Activated CD8-positive, alpha-beta T cell treated with anti-CD3 and anti-CD28 coated beads, Interleukin-2, amount 10 ng/mL, durations not matched to agents 7 days and 5 days (primary cell): ENCODE measurements at regions of chr12 and their contacts with region 1.

Region 1: DNA sequence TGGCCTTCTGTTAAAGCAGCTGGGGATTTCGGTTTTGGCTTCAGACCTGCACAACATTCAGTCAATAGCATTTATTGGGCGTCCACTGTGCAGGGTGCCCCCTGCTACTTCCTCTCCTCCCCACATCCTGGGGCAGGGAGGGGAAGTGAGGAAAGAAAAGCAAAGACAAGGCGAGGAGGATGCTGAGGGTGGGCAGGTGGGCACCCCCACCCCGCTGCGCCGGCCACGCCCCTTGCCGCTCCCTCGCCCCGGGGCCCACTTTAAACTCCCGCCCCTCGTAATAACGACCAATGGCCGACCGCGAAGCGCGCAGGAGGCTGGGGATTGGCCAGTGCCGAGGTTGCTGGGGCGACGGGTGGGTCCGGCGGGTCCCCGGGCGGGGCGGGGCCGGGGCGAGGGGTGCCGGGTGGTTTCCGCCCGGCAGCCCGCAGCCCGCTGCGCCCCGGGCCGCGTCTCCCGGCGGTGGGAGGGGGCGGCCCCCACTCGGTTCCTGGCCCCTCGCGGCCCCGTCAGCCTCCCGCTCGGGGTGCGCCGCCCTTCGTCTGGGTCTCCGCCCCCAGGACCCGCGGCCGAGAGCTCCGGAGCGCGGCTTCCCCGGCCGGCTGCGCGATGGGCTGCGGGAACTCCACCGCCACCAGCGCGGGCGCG is at the start of gene C12orf75:
- DNase-seq: peak; percentile 96
- ATAC-seq: peak; percentile 87
- H3K4me3 Mint-ChIP-seq: peak within 1 kb of the TSS; percentile 91
- H3K27ac Mint-ChIP-seq: peak within 1 kb of the TSS; percentile 91
- H3K4me1 Mint-ChIP-seq: peaks cover 76% of the 10 kb centered on the region
- H3K27me3 Mint-ChIP-seq: no peaks in the 10 kb centered on the region
- total RNA-seq, gene C12orf75: 301 to 311 TPM

Region 2: GRCh38 chr12:105235732-105236476 is 94.5 kb before region 1 on chr12 and contains the start of gene APPL2:
- CTCF ChIA-PET with region 1: interaction called, 10 read pairs
- POLR2A ChIA-PET with region 1: interaction called, 6 read pairs
- DNase-seq: peak; percentile 84
- ATAC-seq: peak; percentile 85
- H3K4me3 Mint-ChIP-seq: peak within 1 kb of the TSS; percentile 87
- H3K27ac Mint-ChIP-seq: peak within 1 kb of the TSS; percentile 86
- H3K4me1 Mint-ChIP-seq: peaks cover 26% of the 10 kb centered on the region
- H3K27me3 Mint-ChIP-seq: no peaks in the 10 kb centered on the region
- total RNA-seq, gene APPL2: 19.0 to 20.4 TPM

Region 3: DNA sequence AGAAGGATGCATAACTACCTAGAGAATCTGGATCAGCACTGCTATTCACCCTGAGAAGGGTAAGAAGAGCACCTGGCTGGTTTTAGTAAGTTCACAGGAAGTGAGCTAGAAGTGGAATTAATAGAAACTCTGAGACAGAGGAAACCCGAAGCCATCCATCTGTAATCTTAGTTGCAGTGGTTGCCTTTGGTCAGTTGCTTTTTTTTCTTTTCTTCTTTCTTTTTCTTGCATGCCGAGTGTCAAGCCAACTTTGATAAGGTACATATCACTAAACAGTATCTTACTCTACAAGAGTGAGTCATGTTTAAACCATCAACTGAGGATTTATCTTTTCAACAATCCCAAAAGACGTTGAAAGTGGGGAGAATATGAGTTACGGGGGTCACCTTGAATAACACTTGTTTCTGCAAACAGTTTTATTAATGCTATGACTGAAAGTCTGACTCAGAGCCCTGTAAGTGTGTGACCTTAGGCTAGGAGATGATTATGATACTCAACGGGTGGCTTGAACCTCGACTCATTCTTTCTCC is 26.8 kb after region 1 on chr12:
- CTCF ChIA-PET with region 1: interaction called, 23 read pairs
- POLR2A ChIA-PET with region 1: interaction called, 9 read pairs
- DNase-seq: no peak
- ATAC-seq: peak; percentile 74
- H3K4me3 Mint-ChIP-seq: peak overlapping the region; percentile 57
- H3K27ac Mint-ChIP-seq: peak overlapping the region; percentile 91
- H3K4me1 Mint-ChIP-seq: peaks cover 71% of the 10 kb centered on the region
- H3K27me3 Mint-ChIP-seq: no peaks in the 10 kb centered on the region

Region 4: GRCh38 chr12:105401198-105401597 is 70.8 kb after region 1 on chr12:
- CTCF ChIA-PET with region 1: no interaction called
- POLR2A ChIA-PET with region 1: no interaction called
- DNase-seq: no peak
- ATAC-seq: no peak
- H3K4me3 Mint-ChIP-seq: no peak overlapping the region
- H3K27ac Mint-ChIP-seq: no peak overlapping the region
- H3K4me1 Mint-ChIP-seq: peaks cover 2% of the 10 kb centered on the region
- H3K27me3 Mint-ChIP-seq: no peaks in the 10 kb centered on the region